ENCODE measurements at regions of chr3 and their contacts with region 1.

Region 1: DNA sequence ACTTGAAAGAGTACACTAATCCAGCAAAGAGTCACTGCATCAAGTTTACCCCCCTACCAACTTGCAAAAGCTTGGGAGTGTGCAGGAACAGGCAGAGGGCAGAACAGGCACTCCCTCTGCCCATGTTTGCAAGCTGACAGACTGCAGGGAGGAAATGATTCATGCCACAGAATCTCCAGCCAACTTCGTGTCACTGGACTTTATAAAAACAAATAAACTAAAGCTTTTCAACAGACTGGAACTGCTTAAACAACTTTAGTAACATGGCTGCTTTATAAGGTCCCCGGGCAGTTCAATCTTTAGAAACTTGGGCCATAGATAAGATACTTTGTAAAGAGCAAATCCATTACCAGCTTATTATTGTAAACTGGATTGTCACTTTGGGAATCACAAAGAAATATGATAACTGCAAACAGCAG is 129.4 kb downstream of the THRB start:
- DNase-seq: no peak
- ATAC-seq: peak; percentile 52
- H3K4me3 ChIP-seq: no peak overlapping the region
- H3K27ac ChIP-seq: peak overlapping the region; percentile 31; the same call in 1 of the 3 replicates
- H3K4me1 ChIP-seq: peaks cover 0 to 4% of the 10 kb centered on the region in 2 experiments; a peak in 3 of 5 replicates
- H3K27me3 ChIP-seq: no peaks in the 10 kb centered on the region
- CTCF ChIP-seq: no peak
- EP300 ChIP-seq: no peak
- POLR2A ChIP-seq: no peak
- RAD21 ChIP-seq: no peak

Region 2: GRCh38 chr3:24254649-24255048 is 110.6 kb before region 1 on chr3:
- CTCF ChIA-PET with region 1: no interaction called
- POLR2A ChIA-PET with region 1: no interaction called
- in situ Hi-C with region 1: no loop called
- intact Hi-C with region 1: no loop called
- DNase-seq: no peak
- ATAC-seq: no peak
- H3K4me3 ChIP-seq: no peak overlapping the region
- H3K27ac ChIP-seq: no peak overlapping the region
- H3K4me1 ChIP-seq: peaks cover 0 to under 1% of the 10 kb centered on the region in 2 experiments; a peak in 2 of 5 replicates
- H3K27me3 ChIP-seq: no peaks in the 10 kb centered on the region
- CTCF ChIP-seq: no peak
- EP300 ChIP-seq: no peak
- POLR2A ChIP-seq: no peak
- RAD21 ChIP-seq: no peak

Region 3: DNA sequence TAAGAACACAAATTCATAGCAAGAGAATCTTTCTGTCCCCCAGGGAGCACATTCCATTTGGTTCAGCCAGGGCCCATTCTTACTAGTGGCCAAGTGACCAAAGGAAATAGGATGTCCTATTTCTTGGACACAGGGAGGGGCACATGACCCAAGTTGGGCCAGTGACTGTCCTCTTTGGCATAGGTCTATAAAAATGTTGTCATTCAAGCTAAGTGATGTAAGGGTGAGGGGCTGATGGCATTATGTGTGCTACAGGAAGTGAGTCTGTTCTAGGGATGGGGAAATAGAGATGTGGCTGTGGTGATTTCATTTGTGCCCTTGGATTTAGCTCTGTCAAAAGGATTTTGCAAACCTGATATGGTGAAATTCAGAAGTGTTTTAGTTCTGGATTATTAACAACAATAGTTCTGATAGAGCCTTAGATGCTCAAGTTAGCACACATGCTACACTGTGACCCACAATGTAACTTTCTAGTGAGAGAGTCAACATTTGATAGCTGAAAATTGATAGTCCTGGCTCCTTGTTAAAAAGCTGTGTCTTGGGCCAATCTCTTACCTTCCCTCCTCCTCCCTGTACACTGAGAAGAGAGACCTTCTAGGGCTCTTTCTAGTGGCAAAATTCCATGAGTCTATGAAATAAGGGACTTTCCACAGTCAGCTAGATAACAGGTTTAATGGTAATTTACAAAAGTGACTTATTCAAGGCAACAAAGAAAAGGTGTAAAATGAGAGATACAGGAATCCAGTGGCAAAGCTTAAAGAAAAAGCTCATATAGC is 12.2 kb after region 1 on chr3:
- CTCF ChIA-PET with region 1: no interaction called
- POLR2A ChIA-PET with region 1: interaction called, 15 read pairs
- in situ Hi-C with region 1: no loop called
- intact Hi-C with region 1: no loop called
- DNase-seq: no peak
- ATAC-seq: peak; percentile 27
- H3K4me3 ChIP-seq: no peak overlapping the region
- H3K27ac ChIP-seq: peak overlapping the region; percentile 67; the same call in 2 of the 3 replicates
- H3K4me1 ChIP-seq: peaks cover 3 to 49% of the 10 kb centered on the region in 2 experiments; a peak in 3 of 5 replicates
- H3K27me3 ChIP-seq: no peaks in the 10 kb centered on the region
- CTCF ChIP-seq: no peak
- EP300 ChIP-seq: no peak
- POLR2A ChIP-seq: no peak
- RAD21 ChIP-seq: no peak